ENCODE measurements at regions of chr2 and their contacts with region 1.

Region 1: GRCh38 chr2:98444436-98445176 is at the start of gene INPP4A:
- DNase-seq: peak; percentile 75 to 85
- ATAC-seq: peak; percentile 90 to 97 (median 94)
- H3K4me3 ChIP-seq: peak within 1 kb of the TSS; percentile 55 to 94 (median 82)
- H3K27ac ChIP-seq: peak within 1 kb of the TSS; percentile 56 to 93 (median 81)
- H3K4me1 ChIP-seq: peaks cover 0 to 42% (median 19%) of the 10 kb centered on the region in 9 donors
- H3K27me3 ChIP-seq: no peaks in the 10 kb centered on the region
- CTCF ChIP-seq: peak in 5 of 9 donors; percentile 7 to 46 (median 32)
- total RNA-seq, gene INPP4A: 15.8 to 31.2 (median 22.0) TPM

Region 2: DNA sequence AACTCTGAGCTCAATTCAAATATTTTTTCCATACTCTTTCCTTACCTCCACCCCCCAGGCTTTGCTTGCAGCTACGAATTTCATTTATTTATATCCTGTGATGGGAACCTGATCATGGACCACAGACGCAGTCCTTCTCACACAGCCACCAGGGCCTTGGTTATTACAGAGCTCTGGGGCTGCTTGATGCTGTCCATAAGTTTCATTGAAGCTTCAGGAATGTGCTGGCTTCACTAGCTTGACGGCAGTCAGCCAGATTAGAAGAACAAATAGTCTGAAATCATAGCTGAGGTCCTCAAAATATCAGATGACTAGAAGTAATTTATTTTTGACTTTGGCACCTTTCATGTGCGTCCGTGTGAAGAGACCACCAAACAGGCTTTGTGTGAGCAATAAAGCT is 252.7 kb before region 1 on chr2:
- intact Hi-C with region 1: no loop called
- DNase-seq: peak in 1 of 2 donors; percentile 13
- ATAC-seq: peak in 7 of 8 donors; percentile 46 to 89 (median 78)
- H3K4me3 ChIP-seq: no peak overlapping the region
- H3K27ac ChIP-seq: peak overlapping the region in 3 of 10 donors; percentile 11 to 54 (median 42)
- H3K4me1 ChIP-seq: peaks cover 0 to 15% (median 0%) of the 10 kb centered on the region in 9 donors
- H3K27me3 ChIP-seq: peaks cover 0 to 7% (median 0%) of the 10 kb centered on the region in 7 donors
- CTCF ChIP-seq: no peak

Region 3: GRCh38 chr2:98487806-98488651 is 43.4 kb after region 1 on chr2:
- intact Hi-C with region 1: loop called in 2 of 10 experiments (anchors 5 kb)
- DNase-seq: no peak
- ATAC-seq: peak in 2 of 8 donors; percentile 39 to 41
- H3K4me3 ChIP-seq: no peak overlapping the region
- H3K27ac ChIP-seq: peak overlapping the region in 3 of 10 donors; percentile 14 to 62 (median 52)
- H3K4me1 ChIP-seq: peaks cover 6 to 94% (median 78%) of the 10 kb centered on the region in 9 donors
- H3K27me3 ChIP-seq: no peaks in the 10 kb centered on the region
- CTCF ChIP-seq: peak in 7 of 9 donors; percentile 17 to 60 (median 42)

Region 4: DNA sequence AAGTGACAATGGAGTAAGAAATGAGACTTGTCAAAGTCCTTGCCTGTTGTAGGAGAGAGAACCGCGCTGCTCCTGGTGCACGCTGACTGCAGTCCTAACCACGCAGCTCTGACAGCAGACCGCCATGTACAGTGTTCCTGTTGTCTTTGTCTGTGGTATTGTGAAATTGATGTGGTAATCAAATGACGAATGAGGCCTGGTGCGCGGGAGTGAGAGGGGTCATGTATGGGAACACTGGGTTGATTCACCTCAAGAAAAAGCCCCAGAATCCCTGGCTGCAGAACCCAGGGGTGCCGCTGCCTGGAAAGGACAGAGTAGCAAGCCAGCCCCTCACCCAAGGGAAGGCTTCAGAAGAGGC is 64.1 kb after region 1 on chr2:
- intact Hi-C with region 1: loop called in 3 of 10 experiments (anchors 5 to 10 kb)
- DNase-seq: peak in 1 of 2 donors; percentile 35
- ATAC-seq: peak; percentile 29 to 80 (median 68)
- H3K4me3 ChIP-seq: no peak overlapping the region
- H3K27ac ChIP-seq: peak overlapping the region in 8 of 10 donors; percentile 18 to 85 (median 60)
- H3K4me1 ChIP-seq: peaks cover 20 to 72% (median 56%) of the 10 kb centered on the region in 9 donors
- H3K27me3 ChIP-seq: no peaks in the 10 kb centered on the region
- CTCF ChIP-seq: no peak

Region 5: GRCh38 chr2:98560256-98560771 is 115.7 kb after region 1 on chr2:
- intact Hi-C with region 1: loop called in 3 of 10 experiments (anchors 5 to 10 kb)
- DNase-seq: peak; percentile 51 to 73
- ATAC-seq: peak; percentile 66 to 94 (median 84)
- H3K4me3 ChIP-seq: no peak overlapping the region
- H3K27ac ChIP-seq: peak overlapping the region; percentile 34 to 89 (median 67)
- H3K4me1 ChIP-seq: peaks cover 16 to 86% (median 52%) of the 10 kb centered on the region in 9 donors
- H3K27me3 ChIP-seq: no peaks in the 10 kb centered on the region
- CTCF ChIP-seq: no peak

Region 6: DNA sequence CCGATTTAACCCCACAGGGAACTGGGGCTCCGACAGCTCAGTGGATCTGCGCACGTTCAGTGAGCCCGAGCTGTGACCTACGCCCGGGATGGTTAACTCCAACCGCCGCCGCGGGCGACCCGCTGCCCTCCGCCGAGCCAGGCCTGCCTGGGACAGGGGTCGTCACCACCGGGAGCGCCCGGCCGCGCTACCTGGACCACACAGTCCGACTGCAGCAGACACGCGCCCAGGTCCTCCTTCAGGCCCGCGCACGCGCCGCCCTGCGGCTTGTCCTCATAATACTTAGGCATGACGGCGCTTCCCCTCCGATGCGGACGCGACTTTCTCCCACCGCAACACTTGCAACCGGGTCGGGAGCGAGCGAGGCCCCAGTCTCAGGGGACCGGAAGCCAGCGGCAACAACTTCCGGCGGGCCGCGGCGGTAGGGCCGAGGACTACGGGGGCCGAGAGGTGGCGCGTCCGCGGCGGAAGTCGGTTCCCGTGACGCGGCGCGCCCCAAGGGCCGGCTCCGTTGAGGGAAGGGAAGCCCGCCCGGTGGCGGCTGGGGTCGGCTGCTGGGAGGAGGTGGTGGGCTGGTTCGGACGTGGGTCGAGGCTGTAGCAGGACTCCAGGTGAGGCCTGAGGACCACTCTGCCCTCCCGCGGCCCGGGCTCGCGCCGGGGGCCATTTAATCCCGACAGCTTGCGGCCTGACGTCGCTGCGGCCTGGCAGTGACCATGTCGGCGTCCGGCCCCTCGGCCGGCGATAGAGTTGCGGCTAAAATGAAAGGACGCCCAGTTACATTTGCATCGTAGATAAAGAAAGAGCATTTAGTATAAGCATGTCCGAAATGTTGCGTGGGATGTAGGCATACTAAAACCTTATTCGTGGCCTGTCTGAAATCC is 163.8 kb after region 1 on chr2 and contains the starts of genes COA5 and UNC50:
- intact Hi-C with region 1: loop called in 1 of 10 experiments (anchors 10 kb)
- DNase-seq: peak; percentile 92
- ATAC-seq: peak; percentile 96 to 99 (median 98)
- H3K4me3 ChIP-seq: peak within 1 kb of the TSS; percentile 62 to 99 (median 94)
- H3K27ac ChIP-seq: peak within 1 kb of the TSS; percentile 84 to 100 (median 96)
- H3K4me1 ChIP-seq: peaks cover 16 to 65% (median 54%) of the 10 kb centered on the region in 9 donors
- H3K27me3 ChIP-seq: no peaks in the 10 kb centered on the region
- CTCF ChIP-seq: peak in 3 of 9 donors; percentile 2 to 18 (median 9)
- total RNA-seq, gene COA5: 20.2 to 33.8 (median 26.0) TPM
- total RNA-seq, gene UNC50: 21.3 to 34.2 (median 25.3) TPM